ENCODE measurements at regions of chr10 and their contacts with region 1.

Region 1: DNA sequence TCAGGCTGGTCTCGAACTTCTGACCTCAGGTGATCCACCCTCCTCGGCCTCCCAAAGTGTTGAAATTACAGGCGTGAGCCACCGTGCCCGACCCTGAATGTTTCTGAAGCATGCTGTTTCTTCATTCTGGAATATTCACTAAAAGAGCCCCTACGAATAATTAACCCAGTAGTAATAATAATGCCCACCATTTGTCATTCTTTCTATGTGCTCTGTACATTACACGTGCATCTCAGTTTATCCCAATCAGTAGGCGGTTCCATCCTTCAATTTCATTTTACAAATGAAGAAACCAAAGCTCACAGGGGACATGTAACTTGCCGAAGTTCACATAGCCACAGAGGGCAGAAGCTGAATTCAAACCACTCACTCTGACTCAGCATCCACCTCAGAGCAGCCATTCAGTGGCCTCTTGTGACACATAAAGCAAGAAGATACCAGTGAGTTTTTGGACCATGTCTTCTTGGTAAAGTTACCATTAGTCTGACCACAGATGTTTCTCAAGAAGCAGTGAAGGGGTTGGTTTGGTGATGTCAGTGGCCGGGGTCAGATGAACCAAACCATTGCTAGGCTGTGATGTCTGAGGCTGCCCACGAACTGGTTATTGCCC is 71.9 kb upstream of the DUSP5 start:
- DNase-seq: peak; percentile 99
- ATAC-seq: peak; percentile 71
- H3K4me3 ChIP-seq: no peak overlapping the region
- H3K27ac ChIP-seq: peak overlapping the region; percentile 87
- H3K4me1 ChIP-seq: peaks cover 14% of the 10 kb centered on the region
- H3K27me3 ChIP-seq: no peaks in the 10 kb centered on the region
- CTCF ChIP-seq: no peak
- POLR2A ChIP-seq: peak; percentile 28; the same call in 1 of the 2 replicates
- RAD21 ChIP-seq: no peak

Region 2: GRCh38 chr10:110113670-110114337 is 312.0 kb before region 1 on chr10:
- CTCF ChIA-PET with region 1: no interaction called
- POLR2A ChIA-PET with region 1: no interaction called
- dilution Hi-C with region 1: no loop called
- in situ Hi-C with region 1: no loop called
- intact Hi-C with region 1: no loop called
- DNase-seq: no peak
- ATAC-seq: no peak
- H3K4me3 ChIP-seq: no peak overlapping the region
- H3K27ac ChIP-seq: no peak overlapping the region
- H3K4me1 ChIP-seq: no peaks in the 10 kb centered on the region
- H3K27me3 ChIP-seq: no peaks in the 10 kb centered on the region
- CTCF ChIP-seq: no peak
- POLR2A ChIP-seq: no peak
- RAD21 ChIP-seq: no peak

Region 3: GRCh38 chr10:110168601-110169481 is 256.9 kb before region 1 on chr10:
- CTCF ChIA-PET with region 1: no interaction called
- POLR2A ChIA-PET with region 1: no interaction called
- dilution Hi-C with region 1: no loop called
- in situ Hi-C with region 1: no loop called
- intact Hi-C with region 1: no loop called
- DNase-seq: no peak
- ATAC-seq: no peak
- H3K4me3 ChIP-seq: no peak overlapping the region
- H3K27ac ChIP-seq: no peak overlapping the region
- H3K4me1 ChIP-seq: no peaks in the 10 kb centered on the region
- H3K27me3 ChIP-seq: peaks cover 61% of the 10 kb centered on the region
- CTCF ChIP-seq: no peak
- POLR2A ChIP-seq: no peak
- RAD21 ChIP-seq: no peak

Region 4: DNA sequence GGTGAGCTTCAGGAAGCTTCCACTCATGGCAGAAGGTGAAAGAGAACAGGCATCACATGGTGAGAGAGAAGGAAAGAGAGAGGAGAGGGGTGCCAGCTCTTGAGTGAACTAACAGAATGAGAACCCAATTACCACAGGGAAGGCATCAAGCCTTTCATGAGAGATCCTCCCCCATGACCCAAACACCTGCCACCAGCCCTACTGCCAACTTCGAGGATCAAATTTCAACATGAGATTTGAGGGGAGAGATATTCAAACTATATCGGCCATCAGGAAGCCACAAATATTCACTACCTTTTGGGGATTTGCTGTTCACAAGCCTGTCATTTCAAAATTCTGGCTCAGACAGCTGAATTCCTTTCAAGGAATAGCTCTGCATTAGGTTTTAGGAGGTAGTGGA is 81.2 kb before region 1 on chr10:
- CTCF ChIA-PET with region 1: no interaction called
- POLR2A ChIA-PET with region 1: no interaction called
- dilution Hi-C with region 1: no loop called
- in situ Hi-C with region 1: no loop called
- intact Hi-C with region 1: no loop called
- DNase-seq: no peak
- ATAC-seq: peak; percentile 27
- H3K4me3 ChIP-seq: no peak overlapping the region
- H3K27ac ChIP-seq: no peak overlapping the region
- H3K4me1 ChIP-seq: peaks cover 4% of the 10 kb centered on the region; the same call in 1 of the 2 replicates
- H3K27me3 ChIP-seq: no peaks in the 10 kb centered on the region
- CTCF ChIP-seq: no peak
- POLR2A ChIP-seq: no peak
- RAD21 ChIP-seq: no peak

Region 5: GRCh38 chr10:110398419-110399162 is 27.2 kb before region 1 on chr10:
- CTCF ChIA-PET with region 1: no interaction called
- POLR2A ChIA-PET with region 1: no interaction called
- dilution Hi-C with region 1: no loop called
- in situ Hi-C with region 1: no loop called
- intact Hi-C with region 1: loop called (anchors 1 kb)
- DNase-seq: peak; percentile 98
- ATAC-seq: peak; percentile 92
- H3K4me3 ChIP-seq: no peak overlapping the region
- H3K27ac ChIP-seq: peak overlapping the region; percentile 74
- H3K4me1 ChIP-seq: peaks cover 22% of the 10 kb centered on the region
- H3K27me3 ChIP-seq: no peaks in the 10 kb centered on the region
- CTCF ChIP-seq: no peak
- POLR2A ChIP-seq: 0 out of 2 replicates have a peak, but pooled peaks have one; percentile 56
- RAD21 ChIP-seq: peak; percentile 17

Region 6: GRCh38 chr10:110547139-110547761 is 121.5 kb after region 1 on chr10:
- CTCF ChIA-PET with region 1: interaction called, 11 read pairs
- POLR2A ChIA-PET with region 1: no interaction called
- dilution Hi-C with region 1: no loop called
- in situ Hi-C with region 1: no loop called
- intact Hi-C with region 1: no loop called
- DNase-seq: peak; percentile 77
- ATAC-seq: peak; percentile 73
- H3K4me3 ChIP-seq: no peak overlapping the region
- H3K27ac ChIP-seq: no peak overlapping the region
- H3K4me1 ChIP-seq: peaks cover 2% of the 10 kb centered on the region; the same call in 1 of the 2 replicates
- H3K27me3 ChIP-seq: peaks cover 2% of the 10 kb centered on the region; the same call in 1 of the 2 replicates
- CTCF ChIP-seq: peak; percentile 82
- POLR2A ChIP-seq: no peak
- RAD21 ChIP-seq: peak; percentile 86

Region 7: GRCh38 chr10:112183329-112184051 is 1757.7 kb after region 1 on chr10 and contains the start of gene GPAM:
- CTCF ChIA-PET with region 1: no interaction called
- POLR2A ChIA-PET with region 1: no interaction called
- dilution Hi-C with region 1: no loop called
- in situ Hi-C with region 1: no loop called
- intact Hi-C with region 1: no loop called
- DNase-seq: peak; percentile 85
- ATAC-seq: peak; percentile 98
- H3K4me3 ChIP-seq: peak within 1 kb of the TSS; percentile 60
- H3K27ac ChIP-seq: peak within 1 kb of the TSS; percentile 82
- H3K4me1 ChIP-seq: 0 out of 2 replicates have a peak, but pooled peaks cover 3% of the 10 kb centered on the region
- H3K27me3 ChIP-seq: no peaks in the 10 kb centered on the region
- CTCF ChIP-seq: no peak
- POLR2A ChIP-seq: peak; percentile 68; the same call in 1 of the 2 replicates
- RAD21 ChIP-seq: 0 out of 2 replicates have a peak, but pooled peaks have one; percentile 12
- total RNA-seq, gene GPAM: 11.5 and 13.1 TPM in 2 replicates

Measured in IMR-90 (cell line).